ENCODE measurements at regions of chr1 and their contacts with region 1.

Region 1: GRCh38 chr1:222455188-222455879 is 92.6 kb downstream of the HHIPL2 start:
- DNase-seq: peak; percentile 86 to 91 (median 86)
- ATAC-seq: peak; percentile 98
- H3K4me3 ChIP-seq: no peak overlapping the region
- H3K27ac ChIP-seq: peak overlapping the region; percentile 21; the same call in 1 of the 3 replicates
- H3K4me1 ChIP-seq: peaks cover 0 to 6% of the 10 kb centered on the region in 2 experiments; a peak in 3 of 5 replicates
- H3K27me3 ChIP-seq: peaks cover 0 to 6% of the 10 kb centered on the region in 2 experiments; a peak in 1 of 5 replicates
- CTCF ChIP-seq: peak; percentile 93 to 98 (median 96)
- EP300 ChIP-seq: peak; percentile 84
- POLR2A ChIP-seq: no peak
- RAD21 ChIP-seq: peak; percentile 95 to 99

Region 2: DNA sequence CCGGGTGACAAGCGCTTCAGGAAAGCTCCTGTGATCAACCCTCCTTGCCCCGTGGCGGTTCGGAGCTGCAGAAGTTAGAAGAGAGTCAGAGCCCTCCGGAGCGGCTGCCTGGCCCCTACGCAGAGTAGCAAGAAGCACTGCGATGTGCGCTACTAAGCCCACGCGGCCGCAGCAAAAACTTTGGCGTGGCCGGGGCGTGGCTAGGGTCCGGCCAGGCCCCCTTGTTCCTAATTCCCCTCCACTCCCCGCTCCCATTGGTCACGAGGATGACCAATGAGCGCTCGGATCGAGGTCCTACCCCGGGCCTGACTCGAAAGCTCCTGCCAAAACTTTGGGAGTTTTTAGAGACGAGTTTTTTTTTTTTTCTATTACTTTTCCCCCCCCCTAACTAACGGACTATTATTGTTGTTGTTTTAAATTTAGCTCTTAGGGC is 1576.2 kb before region 1 on chr1 and contains the start of gene HLX:
- CTCF ChIA-PET with region 1: interaction called, 3 read pairs
- POLR2A ChIA-PET with region 1: no interaction called
- in situ Hi-C with region 1: loop called (anchors 10 kb)
- intact Hi-C with region 1: loop called (anchors 2 kb)
- DNase-seq: peak; percentile 85 to 96 (median 96)
- ATAC-seq: peak; percentile 92
- H3K4me3 ChIP-seq: peak within 1 kb of the TSS; percentile 59
- H3K27ac ChIP-seq: peak within 1 kb of the TSS; percentile 66; the same call in 2 of the 3 replicates
- H3K4me1 ChIP-seq: peaks cover 0 to 31% of the 10 kb centered on the region in 2 experiments; a peak in 2 of 5 replicates
- H3K27me3 ChIP-seq: peaks cover 10 to 35% of the 10 kb centered on the region in 2 experiments; a peak in 4 of 5 replicates
- CTCF ChIP-seq: no peak
- EP300 ChIP-seq: no peak
- POLR2A ChIP-seq: 0 out of 2 replicates have a peak, but pooled peaks have one; percentile 42
- RAD21 ChIP-seq: no peak
- polyA plus RNA-seq, gene HLX: 0.10 TPM

Region 3: DNA sequence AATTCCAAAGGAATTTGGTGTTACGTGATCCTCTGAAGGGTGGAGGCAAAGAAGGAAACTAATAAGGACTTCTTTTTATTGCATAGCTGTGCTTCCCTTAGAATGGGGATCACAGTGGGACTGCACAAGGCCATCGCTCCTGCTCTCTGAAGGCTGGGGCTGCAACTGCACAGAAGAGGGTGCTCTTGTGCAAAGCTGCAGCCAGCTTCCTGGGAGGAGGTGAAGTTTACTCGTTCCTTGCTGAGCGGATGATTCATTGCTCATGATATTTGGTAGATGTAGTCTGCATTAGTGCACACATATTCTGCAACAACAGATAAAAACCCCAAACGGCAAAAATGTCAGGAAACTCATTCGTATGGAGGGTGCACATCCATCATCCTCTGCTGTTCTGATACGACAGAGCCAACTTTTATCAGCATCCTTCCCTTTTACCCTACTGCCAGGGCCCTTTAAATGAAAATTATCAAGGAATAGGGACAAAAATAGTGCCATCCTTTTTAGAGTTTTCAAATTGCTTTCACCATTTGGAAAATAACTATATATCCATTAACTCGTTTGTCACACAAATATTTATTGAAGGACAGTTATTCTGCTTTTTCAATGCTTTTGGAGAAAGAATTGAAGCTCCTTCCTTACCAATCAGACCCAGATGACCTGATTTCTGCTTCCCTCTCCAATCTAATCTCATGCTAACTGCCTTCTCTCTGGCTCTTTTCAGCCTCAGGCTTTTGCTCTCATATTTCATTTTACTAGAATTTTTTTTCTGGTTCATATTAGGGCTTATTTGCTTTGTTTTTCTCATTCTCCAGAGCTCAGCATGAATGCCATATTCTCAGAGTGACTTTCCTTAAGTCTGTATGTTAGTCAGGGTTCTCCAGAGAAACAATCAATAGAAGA is 977.0 kb before region 1 on chr1:
- CTCF ChIA-PET with region 1: no interaction called
- POLR2A ChIA-PET with region 1: no interaction called
- in situ Hi-C with region 1: no loop called
- intact Hi-C with region 1: loop called (anchors 10 kb)
- DNase-seq: peak in 2 of 4 experiments; percentile 8 to 53
- ATAC-seq: peak; percentile 89
- H3K4me3 ChIP-seq: no peak overlapping the region
- H3K27ac ChIP-seq: no peak overlapping the region
- H3K4me1 ChIP-seq: no peaks in the 10 kb centered on the region
- H3K27me3 ChIP-seq: no peaks in the 10 kb centered on the region
- CTCF ChIP-seq: peak; percentile 43 to 61 (median 54); a peak in 4 of 6 replicates
- EP300 ChIP-seq: no peak
- POLR2A ChIP-seq: no peak
- RAD21 ChIP-seq: peak; percentile 95

Region 4: DNA sequence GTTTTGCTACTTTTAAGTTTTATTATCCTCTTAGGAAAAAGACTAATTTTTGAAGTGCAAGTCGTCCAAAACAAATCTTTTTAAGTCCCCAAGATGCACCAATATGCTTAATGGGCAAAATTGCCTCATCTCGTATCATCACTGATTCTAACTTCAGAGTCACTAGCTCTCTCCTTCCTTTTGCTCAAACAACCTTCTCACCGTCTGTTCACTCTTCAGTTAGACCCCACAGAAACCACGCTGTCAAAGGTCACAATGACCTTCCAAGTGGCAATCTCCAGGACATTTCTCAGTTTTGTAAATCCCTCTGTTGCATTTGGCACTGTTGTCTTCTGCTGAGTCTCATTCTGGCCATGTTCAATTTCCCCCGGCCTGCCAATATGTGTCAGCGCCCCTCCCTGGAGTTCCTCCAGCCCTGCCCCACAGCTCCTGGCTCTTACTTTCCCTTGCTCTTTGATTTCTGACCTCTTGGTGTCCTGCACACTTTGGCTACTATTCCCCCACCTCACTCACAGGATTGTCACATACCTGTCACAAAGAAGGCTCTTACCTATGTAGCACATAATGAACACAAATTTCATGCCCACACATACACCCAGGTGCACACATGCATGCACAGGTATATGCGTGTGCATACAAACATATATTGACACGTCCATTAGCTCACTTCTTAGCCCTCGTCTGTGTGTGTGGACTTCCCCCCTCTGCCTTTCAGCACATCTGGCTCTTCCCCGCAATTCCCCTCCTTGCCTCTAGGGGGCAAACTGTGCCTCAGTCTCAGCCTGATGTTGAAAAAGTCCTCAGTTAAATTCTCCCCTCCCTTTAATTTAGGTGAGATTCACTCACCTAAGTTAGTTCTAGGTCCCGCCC is 359.5 kb before region 1 on chr1:
- CTCF ChIA-PET with region 1: no interaction called
- POLR2A ChIA-PET with region 1: no interaction called
- in situ Hi-C with region 1: loop called (anchors 10 kb)
- intact Hi-C with region 1: loop called (anchors 2 kb)
- DNase-seq: peak; percentile 60 to 76 (median 68)
- ATAC-seq: peak; percentile 93
- H3K4me3 ChIP-seq: no peak overlapping the region
- H3K27ac ChIP-seq: no peak overlapping the region
- H3K4me1 ChIP-seq: no peaks in the 10 kb centered on the region
- H3K27me3 ChIP-seq: no peaks in the 10 kb centered on the region; a peak in 1 of 5 replicates
- CTCF ChIP-seq: peak; percentile 67 to 92 (median 78)
- EP300 ChIP-seq: no peak
- POLR2A ChIP-seq: no peak
- RAD21 ChIP-seq: peak; percentile 57 to 62

Region 5: DNA sequence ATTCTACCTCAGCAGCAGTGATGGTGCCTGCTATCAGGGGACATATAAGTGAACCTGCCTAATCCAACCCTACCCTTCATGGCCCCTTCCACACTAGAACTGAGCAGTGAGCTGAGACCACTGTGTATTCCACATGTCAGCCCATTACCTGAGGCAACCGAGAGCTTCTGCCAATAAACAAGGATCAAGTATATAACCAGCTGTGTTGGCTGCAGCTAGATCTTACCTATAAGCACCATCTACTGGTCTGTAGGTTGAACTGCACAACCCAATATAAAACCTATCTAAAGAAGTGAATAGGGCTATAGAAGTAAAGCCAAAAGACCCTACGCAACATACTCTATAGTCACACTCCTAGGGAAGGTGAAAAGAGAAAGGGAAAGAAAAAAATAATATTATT is 284.3 kb before region 1 on chr1:
- CTCF ChIA-PET with region 1: no interaction called
- POLR2A ChIA-PET with region 1: no interaction called
- in situ Hi-C with region 1: no loop called
- intact Hi-C with region 1: loop called (anchors 2 kb)
- DNase-seq: peak in 2 of 4 experiments; percentile 9 to 19
- ATAC-seq: peak; percentile 77
- H3K4me3 ChIP-seq: no peak overlapping the region
- H3K27ac ChIP-seq: no peak overlapping the region
- H3K4me1 ChIP-seq: no peaks in the 10 kb centered on the region
- H3K27me3 ChIP-seq: no peaks in the 10 kb centered on the region
- CTCF ChIP-seq: peak; percentile 15 to 50 (median 37); a peak in 4 of 6 replicates
- EP300 ChIP-seq: no peak
- POLR2A ChIP-seq: no peak
- RAD21 ChIP-seq: peak; percentile 41 to 71; a peak in 3 of 4 replicates

Region 6: GRCh38 chr1:222521299-222522104 is 66.2 kb after region 1 on chr1:
- CTCF ChIA-PET with region 1: no interaction called
- POLR2A ChIA-PET with region 1: no interaction called
- in situ Hi-C with region 1: no loop called
- intact Hi-C with region 1: no loop called
- DNase-seq: peak in 1 of 4 experiments; percentile 24
- ATAC-seq: peak; percentile 84
- H3K4me3 ChIP-seq: no peak overlapping the region
- H3K27ac ChIP-seq: no peak overlapping the region
- H3K4me1 ChIP-seq: no peaks in the 10 kb centered on the region; a peak in 1 of 5 replicates
- H3K27me3 ChIP-seq: peaks cover 15 to 29% of the 10 kb centered on the region in 2 experiments; a peak in 4 of 5 replicates
- CTCF ChIP-seq: no peak
- EP300 ChIP-seq: no peak
- POLR2A ChIP-seq: no peak
- RAD21 ChIP-seq: no peak

Measured in K562 (cell line).